Activated B cell treated with CpG ODN at 0.5 μM for 24 hours (primary cell): ENCODE measurements at regions of chr20 and their contacts with region 1.

Region 1: DNA sequence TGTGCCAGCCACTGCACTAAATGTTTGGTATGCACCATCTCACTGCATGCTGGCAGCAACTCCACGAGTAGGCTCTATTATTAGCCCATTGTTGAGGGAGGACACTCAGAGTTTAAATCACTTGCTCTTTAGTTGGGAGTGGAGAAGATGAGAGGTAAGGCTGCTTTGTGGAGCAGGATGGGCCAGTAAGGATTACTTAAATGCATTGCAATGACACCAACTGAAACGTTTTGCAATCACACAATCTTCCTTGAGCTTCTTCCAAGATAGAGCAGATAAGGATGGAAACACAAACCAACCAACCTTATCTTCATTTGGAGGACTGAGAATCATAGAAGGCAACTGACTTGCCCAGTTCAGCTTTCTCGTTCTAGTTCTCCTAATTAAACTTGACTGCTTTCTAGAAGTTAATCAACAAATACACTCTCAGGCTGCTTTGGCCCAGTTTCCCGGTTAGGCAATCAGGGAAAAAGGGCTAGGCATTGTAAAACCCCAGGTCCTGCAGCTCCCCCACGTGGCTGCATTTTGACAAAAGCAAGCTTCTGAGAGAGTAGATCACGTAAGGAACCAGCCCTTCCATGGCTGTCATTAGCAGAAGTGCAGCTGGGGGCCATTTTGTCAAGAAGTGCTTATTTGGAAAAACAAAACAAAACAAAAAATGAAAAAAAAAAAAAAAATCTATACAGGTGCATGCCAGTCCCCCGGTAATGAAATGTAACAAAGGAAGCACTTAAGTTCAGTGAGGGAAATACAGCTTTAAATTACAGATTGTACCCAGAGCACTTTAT is 130.6 kb downstream of the BCAS1 start:
- DNase-seq: peak; percentile 50
- ATAC-seq: peak; percentile 68
- H3K4me3 Mint-ChIP-seq: peak overlapping the region; percentile 62
- H3K27ac Mint-ChIP-seq: peak overlapping the region; percentile 82
- H3K4me1 Mint-ChIP-seq: peaks cover 88% of the 10 kb centered on the region
- H3K27me3 Mint-ChIP-seq: no peaks in the 10 kb centered on the region
- CTCF ChIP-seq: no peak

Region 2: DNA sequence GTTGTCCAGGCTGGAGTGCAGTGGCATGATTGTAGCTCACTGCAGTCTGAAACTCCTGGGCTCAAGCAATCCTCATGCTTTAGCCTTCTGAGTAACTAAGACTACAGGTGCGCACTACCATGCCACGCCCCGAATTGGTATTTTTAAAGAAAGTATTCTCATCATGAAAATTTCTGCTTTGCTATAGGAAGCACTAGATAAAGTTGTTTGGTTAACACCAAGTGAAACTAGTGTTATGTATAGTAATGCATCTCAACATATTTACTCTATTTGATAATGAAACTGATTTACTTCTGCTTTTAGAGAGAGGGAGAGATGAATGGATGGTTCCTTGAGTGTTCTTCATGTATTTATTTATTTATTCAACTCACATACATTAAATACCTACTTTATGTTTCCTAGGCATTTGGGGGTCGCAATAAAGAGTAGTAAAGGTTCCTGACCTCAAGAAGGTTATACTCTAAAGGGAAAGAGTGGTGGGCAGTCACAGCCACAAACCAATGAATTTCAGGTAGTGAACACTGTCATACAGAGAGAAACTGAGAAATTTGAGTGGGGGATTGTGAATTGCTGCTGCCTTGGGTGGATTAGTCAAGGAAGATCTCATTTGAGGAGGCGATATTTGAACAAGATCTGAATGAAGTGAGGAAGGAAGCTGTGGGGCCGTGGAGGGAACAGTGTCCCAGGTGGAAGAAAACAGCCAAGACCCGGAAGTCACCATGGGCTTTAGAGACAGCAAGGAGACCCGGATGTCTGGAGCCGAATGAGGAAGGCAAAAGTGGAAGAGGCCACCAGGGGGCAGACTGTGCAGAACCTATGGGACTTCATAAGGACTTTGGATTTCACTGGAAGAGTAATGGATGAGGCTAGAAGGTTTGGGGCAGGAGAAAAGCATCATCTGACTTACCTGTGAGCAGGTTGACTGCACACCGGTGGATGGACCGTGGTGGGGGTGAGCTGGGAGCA is 782.0 kb before region 1 on chr20:
- CTCF ChIA-PET with region 1: no interaction called
- POLR2A ChIA-PET with region 1: no interaction called
- intact Hi-C with region 1: loop called (anchors 2 kb)
- DNase-seq: peak; percentile 24
- ATAC-seq: peak; percentile 53
- H3K4me3 Mint-ChIP-seq: peak overlapping the region; percentile 36
- H3K27ac Mint-ChIP-seq: peak overlapping the region; percentile 86
- H3K4me1 Mint-ChIP-seq: peaks cover 43% of the 10 kb centered on the region
- H3K27me3 Mint-ChIP-seq: no peaks in the 10 kb centered on the region
- CTCF ChIP-seq: no peak

Region 3: DNA sequence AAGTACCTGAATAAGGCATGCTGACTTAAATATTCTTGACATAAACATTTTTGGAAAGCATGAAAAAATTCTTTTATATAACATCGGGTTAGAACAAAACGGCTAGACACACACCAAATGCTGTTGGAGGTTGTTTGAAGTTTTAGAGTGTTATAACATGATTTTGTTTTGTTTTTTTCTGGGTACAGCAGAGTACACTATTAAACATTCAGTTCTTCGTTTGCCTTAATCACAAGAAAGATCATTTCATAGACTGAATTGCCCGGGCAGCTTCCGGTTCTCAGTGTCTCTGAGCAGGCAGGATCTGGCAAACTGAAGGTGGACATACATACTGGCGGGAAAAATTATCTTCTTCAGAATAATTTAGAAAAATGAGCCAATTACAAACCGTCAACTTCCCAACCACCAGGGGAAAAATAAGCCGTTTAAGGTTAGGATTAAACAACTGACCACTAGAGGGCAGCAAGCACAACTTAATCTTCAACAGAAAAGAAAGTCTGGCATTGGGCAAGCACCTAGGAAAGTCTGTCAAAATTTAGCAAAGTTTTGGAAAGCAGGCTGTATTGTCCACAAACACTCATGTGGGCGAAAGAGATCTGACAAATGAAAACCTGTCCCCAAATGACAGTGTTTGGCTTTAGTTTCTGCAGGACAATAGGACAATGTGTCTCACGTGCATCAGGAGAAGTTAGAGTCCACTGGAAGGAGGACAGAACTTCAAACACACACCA is 361.1 kb before region 1 on chr20:
- CTCF ChIA-PET with region 1: interaction called, 57 read pairs
- POLR2A ChIA-PET with region 1: interaction called, 14 read pairs
- intact Hi-C with region 1: loop called (anchors 1 kb)
- DNase-seq: no peak
- ATAC-seq: peak; percentile 58
- H3K4me3 Mint-ChIP-seq: peak overlapping the region; percentile 32
- H3K27ac Mint-ChIP-seq: peak overlapping the region; percentile 88
- H3K4me1 Mint-ChIP-seq: peaks cover 56% of the 10 kb centered on the region
- H3K27me3 Mint-ChIP-seq: no peaks in the 10 kb centered on the region
- CTCF ChIP-seq: no peak

Region 4: GRCh38 chr20:53738039-53738944 is 201.5 kb before region 1 on chr20:
- CTCF ChIA-PET with region 1: interaction called, 11 read pairs
- POLR2A ChIA-PET with region 1: interaction called, 3 read pairs
- intact Hi-C with region 1: no loop called
- DNase-seq: no peak
- ATAC-seq: no peak
- H3K4me3 Mint-ChIP-seq: peak overlapping the region; percentile 74
- H3K27ac Mint-ChIP-seq: peak overlapping the region; percentile 97
- H3K4me1 Mint-ChIP-seq: peaks cover 78% of the 10 kb centered on the region
- H3K27me3 Mint-ChIP-seq: no peaks in the 10 kb centered on the region
- CTCF ChIP-seq: no peak

Region 5: GRCh38 chr20:53926428-53927028 is 13.2 kb before region 1 on chr20:
- CTCF ChIA-PET with region 1: interaction called, 45 read pairs
- POLR2A ChIA-PET with region 1: interaction called, 182 read pairs
- intact Hi-C with region 1: loop called (anchors 1 kb)
- DNase-seq: peak; percentile 34
- ATAC-seq: peak; percentile 83
- H3K4me3 Mint-ChIP-seq: peak overlapping the region; percentile 83
- H3K27ac Mint-ChIP-seq: peak overlapping the region; percentile 96
- H3K4me1 Mint-ChIP-seq: peaks cover 92% of the 10 kb centered on the region
- H3K27me3 Mint-ChIP-seq: no peaks in the 10 kb centered on the region
- CTCF ChIP-seq: no peak

Region 6: GRCh38 chr20:54062812-54063280 is 123.1 kb after region 1 on chr20:
- CTCF ChIA-PET with region 1: interaction called, 17 read pairs
- POLR2A ChIA-PET with region 1: no interaction called
- intact Hi-C with region 1: loop called (anchors 2 kb)
- DNase-seq: no peak
- ATAC-seq: no peak
- H3K4me3 Mint-ChIP-seq: no peak overlapping the region
- H3K27ac Mint-ChIP-seq: no peak overlapping the region
- H3K4me1 Mint-ChIP-seq: peaks cover 38% of the 10 kb centered on the region
- H3K27me3 Mint-ChIP-seq: no peaks in the 10 kb centered on the region
- CTCF ChIP-seq: no peak

Region 7: GRCh38 chr20:54649511-54649962 is 709.8 kb after region 1 on chr20:
- CTCF ChIA-PET with region 1: no interaction called
- POLR2A ChIA-PET with region 1: no interaction called
- intact Hi-C with region 1: loop called (anchors 5 kb)
- DNase-seq: peak; percentile 24
- ATAC-seq: peak; percentile 28
- H3K4me3 Mint-ChIP-seq: no peak overlapping the region
- H3K27ac Mint-ChIP-seq: no peak overlapping the region
- H3K4me1 Mint-ChIP-seq: no peaks in the 10 kb centered on the region
- H3K27me3 Mint-ChIP-seq: peaks cover 7% of the 10 kb centered on the region
- CTCF ChIP-seq: peak; percentile 68